ENCODE measurements at regions of chr17 and their contacts with region 1.

Region 1: DNA sequence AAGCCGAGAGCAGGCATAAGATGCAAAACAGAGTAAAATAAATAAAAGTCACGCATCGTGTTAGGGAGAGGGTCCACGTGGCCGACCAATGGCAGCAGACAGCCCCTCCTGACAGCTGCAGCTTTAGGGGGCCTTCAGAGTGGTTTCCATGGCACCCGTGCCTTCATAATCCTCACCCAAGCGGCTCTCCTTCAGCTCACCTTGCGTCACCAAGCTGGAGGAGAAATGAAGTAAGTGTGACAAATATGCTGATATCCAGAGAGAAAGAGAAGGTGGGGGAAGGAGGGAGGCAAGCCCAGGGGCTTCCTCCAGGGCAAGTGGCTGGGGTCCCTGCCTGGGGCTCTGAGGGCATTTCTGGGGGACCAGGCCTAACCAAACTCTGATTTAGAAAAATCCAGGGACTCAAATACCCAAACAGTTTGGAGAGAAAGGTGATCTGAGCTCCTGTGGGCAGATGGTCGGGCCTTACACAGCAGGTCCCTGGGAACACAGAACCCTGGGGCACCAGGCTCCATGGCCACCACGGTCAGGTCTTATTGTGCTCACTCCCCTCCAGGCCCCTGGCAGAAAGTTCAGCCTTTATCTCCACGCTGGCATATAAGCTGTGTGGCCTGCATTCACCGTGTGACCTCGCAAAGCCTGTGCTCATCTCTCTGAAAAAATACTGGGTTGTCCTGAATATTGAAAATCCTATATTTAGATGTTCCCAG is 80.7 kb upstream of the TNRC6C start:
- DNase-seq: no peak
- H3K4me3 ChIP-seq: no peak overlapping the region
- H3K27ac ChIP-seq: no peak overlapping the region
- H3K4me1 ChIP-seq: no peaks in the 10 kb centered on the region
- H3K27me3 ChIP-seq: no peaks in the 10 kb centered on the region
- CTCF ChIP-seq: no peak
- POLR2A ChIP-seq: no peak

Region 2: DNA sequence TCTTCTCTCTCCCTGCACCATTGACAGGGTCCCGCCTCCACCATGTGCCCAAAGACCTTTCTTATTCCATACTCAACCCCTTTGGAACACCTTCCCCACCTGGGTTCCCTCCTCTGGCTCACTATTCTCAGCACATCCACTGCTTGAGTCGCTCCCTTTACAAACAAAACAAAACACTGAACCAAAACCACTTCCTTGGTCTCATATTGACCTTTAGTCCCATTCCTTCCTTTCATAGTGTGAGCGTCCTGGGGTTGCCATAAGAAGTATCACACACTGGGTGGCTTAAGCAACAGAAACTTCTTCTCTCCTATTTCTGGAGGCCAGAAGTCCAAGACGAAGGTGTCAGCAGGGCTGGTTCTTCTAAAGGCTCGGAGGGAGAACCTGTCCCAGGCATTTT is 74.6 kb after region 1 on chr17:
- intact Hi-C with region 1: loop called (anchors 2 kb)
- DNase-seq: no peak
- H3K4me3 ChIP-seq: no peak overlapping the region
- H3K27ac ChIP-seq: no peak overlapping the region
- H3K4me1 ChIP-seq: no peaks in the 10 kb centered on the region
- H3K27me3 ChIP-seq: no peaks in the 10 kb centered on the region
- CTCF ChIP-seq: no peak
- POLR2A ChIP-seq: no peak

Measured in prostate gland (tissue), 2 donors.